CD4-positive, alpha-beta memory T cell (primary cell): ENCODE measurements at regions of chr5 and their contacts with region 1.

Region 1: DNA sequence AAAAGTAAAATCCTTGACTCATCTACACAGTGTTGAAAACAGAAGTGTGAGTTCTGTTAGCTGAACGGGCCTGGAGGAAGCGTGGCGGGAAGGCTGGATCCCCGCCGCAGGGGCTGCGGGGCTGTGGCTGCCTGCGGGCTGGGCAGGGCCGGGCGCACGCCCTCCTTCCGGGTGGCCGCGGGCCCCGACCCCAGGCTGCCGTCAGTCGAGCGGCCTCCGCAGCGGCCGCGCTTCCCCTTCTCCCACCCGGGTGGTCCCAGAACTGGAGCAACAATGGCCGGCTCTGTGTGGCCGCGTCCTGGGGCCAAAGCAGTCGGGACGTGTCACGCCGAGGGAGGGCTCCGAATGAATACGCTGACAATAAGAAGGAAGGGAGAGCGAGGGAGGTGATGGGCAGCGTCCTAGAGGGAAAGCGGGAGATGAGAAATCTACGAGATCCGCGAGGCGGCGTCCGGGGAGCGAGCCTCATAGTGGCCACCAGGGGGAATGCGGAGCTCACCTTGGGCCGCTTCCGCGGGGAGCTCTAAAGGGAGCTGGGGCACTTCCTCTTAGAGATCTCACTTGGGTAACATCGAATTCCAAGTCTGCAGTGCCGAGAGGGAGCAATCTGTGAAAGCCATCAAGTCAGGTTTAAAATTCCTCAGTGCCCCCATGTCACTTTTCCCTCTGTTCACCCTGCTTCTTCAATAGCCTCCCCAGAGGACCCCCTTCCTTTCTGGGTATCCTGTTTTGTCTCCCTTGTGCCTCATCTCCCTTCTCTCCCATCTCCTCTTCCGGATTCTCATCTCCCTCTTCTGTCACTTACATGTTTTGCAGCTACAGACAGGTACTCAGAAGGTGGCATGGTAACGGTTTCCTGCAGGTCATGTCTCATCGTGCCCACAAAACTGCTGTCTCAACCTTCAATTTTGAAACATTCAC is 83.9 kb downstream of the SLC1A3 start:
- DNase-seq: peak; percentile 28 to 62 (median 44)
- H3K4me3 ChIP-seq: peak overlapping the region in 1 of 2 donors; percentile 60
- H3K4me3 Mint-ChIP-seq: peak overlapping the region; percentile 74 to 89 (median 83)
- H3K27ac ChIP-seq: no peak overlapping the region
- H3K27ac Mint-ChIP-seq: peak overlapping the region in 3 of 7 donors; percentile 1 to 78 (median 24)
- H3K4me1 ChIP-seq: peaks cover 12% of the 10 kb centered on the region
- H3K4me1 Mint-ChIP-seq: peaks cover 6 to 13% (median 9%) of the 10 kb centered on the region in 4 donors
- H3K27me3 ChIP-seq: no peaks in the 10 kb centered on the region
- H3K27me3 Mint-ChIP-seq: peaks cover 9 to 22% of the 10 kb centered on the region in 2 donors

Region 2: DNA sequence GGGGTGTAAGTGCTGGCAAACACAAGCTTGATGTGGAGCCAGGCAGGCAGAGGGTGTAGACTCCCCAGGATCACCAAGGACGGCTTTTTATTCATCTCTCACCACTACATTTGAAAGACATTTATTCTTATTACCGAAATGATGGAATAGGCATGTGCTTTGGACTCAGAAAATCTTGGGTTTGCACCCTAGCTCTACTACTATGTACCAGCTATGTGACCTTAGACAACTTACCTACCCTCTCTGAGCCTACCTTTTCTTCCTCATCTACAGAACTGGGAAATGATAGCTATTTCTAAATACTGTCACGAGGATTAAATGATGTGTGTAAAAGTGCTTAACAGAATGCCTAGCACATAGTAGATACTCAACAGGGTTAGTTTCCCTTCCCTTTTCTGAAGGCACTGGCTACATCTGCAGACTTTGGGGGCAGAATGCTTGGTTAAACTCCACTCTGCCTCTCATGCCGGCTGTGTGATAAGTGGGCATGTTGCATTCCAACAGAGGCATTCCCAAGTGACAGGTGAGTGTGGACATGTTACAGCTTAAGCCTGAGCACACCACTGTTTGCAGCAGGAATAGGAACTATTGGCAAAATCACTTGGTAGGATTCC is 10.9 kb after region 1 on chr5:
- CTCF ChIA-PET with region 1: interaction called, 28 read pairs
- POLR2A ChIA-PET with region 1: no interaction called
- intact Hi-C with region 1: no loop called
- DNase-seq: no peak
- H3K4me3 ChIP-seq: no peak overlapping the region
- H3K4me3 Mint-ChIP-seq: no peak overlapping the region
- H3K27ac ChIP-seq: no peak overlapping the region
- H3K27ac Mint-ChIP-seq: no peak overlapping the region
- H3K4me1 ChIP-seq: no peaks in the 10 kb centered on the region
- H3K4me1 Mint-ChIP-seq: peaks cover 0 to under 1% (median 0%) of the 10 kb centered on the region in 4 donors
- H3K27me3 ChIP-seq: no peaks in the 10 kb centered on the region
- H3K27me3 Mint-ChIP-seq: peaks cover 5 to 9% of the 10 kb centered on the region in 2 donors

Region 3: GRCh38 chr5:37549419-37549818 is 859.1 kb after region 1 on chr5:
- CTCF ChIA-PET with region 1: no interaction called
- POLR2A ChIA-PET with region 1: no interaction called
- intact Hi-C with region 1: no loop called
- DNase-seq: no peak
- H3K4me3 ChIP-seq: no peak overlapping the region
- H3K4me3 Mint-ChIP-seq: no peak overlapping the region
- H3K27ac ChIP-seq: no peak overlapping the region
- H3K27ac Mint-ChIP-seq: no peak overlapping the region
- H3K4me1 ChIP-seq: no peaks in the 10 kb centered on the region
- H3K4me1 Mint-ChIP-seq: peaks cover 9 to 23% (median 12%) of the 10 kb centered on the region in 4 donors
- H3K27me3 ChIP-seq: no peaks in the 10 kb centered on the region
- H3K27me3 Mint-ChIP-seq: no peaks in the 10 kb centered on the region